Aorta (tissue), 5 donors: ENCODE measurements at regions of chr2 and their contacts with region 1.

Region 1: DNA sequence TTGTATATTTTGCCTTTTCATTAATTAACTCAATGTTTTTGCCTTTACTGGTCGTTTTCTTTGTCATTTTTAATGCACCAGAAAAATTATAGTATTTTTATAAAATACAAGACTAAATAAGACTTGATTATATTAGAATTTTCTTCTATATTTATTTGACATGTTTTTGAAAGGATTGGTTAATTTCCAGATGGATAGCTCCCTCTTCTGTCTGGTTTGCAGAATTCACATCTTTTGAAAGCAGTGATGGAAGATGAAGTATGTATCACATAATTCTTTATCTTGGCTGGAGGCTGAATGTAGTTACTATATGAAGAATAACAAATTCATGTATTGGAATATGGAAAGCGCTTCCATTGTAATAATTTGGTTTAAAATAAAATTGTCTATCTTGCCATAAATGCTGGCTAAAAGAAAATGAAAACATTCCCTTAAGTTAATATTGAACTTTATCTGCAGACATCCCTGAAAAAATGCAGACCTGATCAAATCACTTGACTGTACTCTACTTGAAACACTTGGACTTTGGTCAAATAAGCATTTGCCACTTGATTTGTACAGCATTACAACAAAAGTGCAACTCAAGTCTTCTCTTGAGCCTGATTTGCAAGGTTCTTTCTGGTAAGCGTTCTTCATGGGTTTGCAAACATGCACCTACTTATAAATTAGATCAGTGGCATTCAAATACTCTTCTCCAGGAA is 86.3 kb upstream of the EFEMP1 start:
- DNase-seq: no peak
- ATAC-seq: peak; percentile 68
- H3K4me3 ChIP-seq: no peak overlapping the region
- H3K27ac ChIP-seq: no peak overlapping the region
- H3K4me1 ChIP-seq: peaks cover 2 to 3% of the 10 kb centered on the region in 2 donors
- H3K27me3 ChIP-seq: no peaks in the 10 kb centered on the region

Region 2: DNA sequence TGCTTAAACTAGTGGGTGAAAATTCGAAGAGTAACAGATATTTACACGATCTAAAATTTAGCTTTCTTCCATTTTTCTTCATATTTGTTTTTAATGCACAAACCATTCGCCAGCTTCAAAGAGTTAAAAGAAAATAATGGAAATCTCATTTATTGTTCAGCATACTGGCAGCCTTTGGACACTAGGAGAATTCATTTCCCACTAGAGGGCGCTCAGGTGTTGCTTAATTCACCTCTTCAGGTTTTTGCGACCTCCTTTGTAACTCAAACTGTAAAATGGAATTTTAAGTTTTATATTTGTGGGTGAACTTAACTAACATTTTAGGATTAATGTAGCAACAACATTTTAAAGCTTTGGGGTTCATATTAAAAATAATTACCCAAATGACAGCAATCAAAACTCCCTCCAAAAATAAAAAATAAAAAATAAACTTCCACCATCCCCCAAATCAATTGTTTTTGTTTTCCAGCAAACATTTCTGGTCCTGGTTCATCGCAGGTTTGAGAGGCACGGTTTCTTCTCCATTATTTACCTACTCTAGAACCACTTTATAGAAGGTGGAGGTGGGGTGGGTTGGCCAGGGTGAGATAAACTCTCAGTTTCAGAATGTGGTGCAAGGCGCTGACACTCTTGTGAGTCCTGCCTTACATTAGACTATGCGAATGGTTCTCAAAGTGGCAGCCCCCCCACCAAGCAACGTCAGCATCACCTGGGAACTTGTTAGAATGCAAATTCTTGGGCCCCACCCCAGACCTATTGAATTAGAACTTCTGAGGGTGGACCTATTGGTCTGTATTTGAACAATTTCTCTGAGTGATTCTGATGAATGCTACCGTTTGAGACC is 291.5 kb before region 1 on chr2:
- intact Hi-C with region 1: loop called (anchors 1 to 2 kb)
- DNase-seq: no peak
- ATAC-seq: peak; percentile 82
- H3K4me3 ChIP-seq: no peak overlapping the region
- H3K27ac ChIP-seq: no peak overlapping the region
- H3K4me1 ChIP-seq: no peaks in the 10 kb centered on the region
- H3K27me3 ChIP-seq: no peaks in the 10 kb centered on the region

Region 3: GRCh38 chr2:55771612-55772011 is 238.3 kb before region 1 on chr2:
- intact Hi-C with region 1: loop called (anchors 2 to 5 kb)
- DNase-seq: no peak
- ATAC-seq: no peak
- H3K4me3 ChIP-seq: no peak overlapping the region
- H3K27ac ChIP-seq: no peak overlapping the region
- H3K4me1 ChIP-seq: no peaks in the 10 kb centered on the region
- H3K27me3 ChIP-seq: no peaks in the 10 kb centered on the region

Region 4: DNA sequence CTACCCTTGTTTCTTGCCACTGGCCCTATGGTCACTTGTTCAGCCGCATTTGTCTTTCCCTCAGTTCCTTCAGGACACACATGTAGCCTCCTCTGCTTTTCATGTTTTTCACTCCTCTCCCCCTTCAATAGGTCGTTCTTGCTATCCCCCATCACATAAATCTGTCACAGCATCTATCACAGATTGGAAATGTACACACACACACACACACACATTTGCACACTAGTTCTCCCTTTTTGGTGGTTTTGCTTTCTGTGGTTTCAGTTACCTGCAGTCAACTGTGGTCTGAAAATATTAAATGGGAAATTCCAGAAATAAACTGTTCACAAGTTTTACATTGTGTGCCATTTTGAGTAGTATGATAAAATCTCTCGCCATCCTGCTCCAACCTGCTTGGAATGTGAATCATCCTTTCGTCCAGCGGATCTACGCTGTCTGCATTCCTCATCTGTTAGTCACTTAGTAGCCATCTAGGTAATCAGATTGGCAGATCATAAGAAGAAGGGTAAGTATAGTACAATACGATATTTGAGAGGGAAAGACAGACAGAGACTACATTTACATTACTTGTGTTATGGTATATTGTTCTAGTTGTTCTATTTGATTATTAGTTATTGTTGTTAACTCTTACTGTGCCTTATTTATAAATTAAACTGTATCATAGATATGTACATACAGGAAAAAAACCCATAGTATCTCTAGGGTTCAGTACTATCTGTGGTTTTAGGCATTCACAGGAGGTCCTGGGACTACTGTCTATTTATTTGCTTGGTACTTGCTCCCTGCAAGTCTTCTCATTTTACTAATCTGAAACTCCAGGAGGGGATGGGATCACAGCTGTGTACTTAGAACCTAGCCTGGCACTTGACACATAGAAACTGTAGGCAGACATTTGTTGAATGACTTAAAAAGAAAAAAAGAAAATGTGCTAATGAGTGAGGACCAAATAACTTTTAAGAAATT is 230.2 kb before region 1 on chr2:
- intact Hi-C with region 1: loop called in 1 of 2 experiments (anchors 5 kb)
- DNase-seq: no peak
- ATAC-seq: no peak
- H3K4me3 ChIP-seq: no peak overlapping the region
- H3K27ac ChIP-seq: no peak overlapping the region
- H3K4me1 ChIP-seq: peaks cover 0 to 1% of the 10 kb centered on the region in 2 donors
- H3K27me3 ChIP-seq: no peaks in the 10 kb centered on the region

Region 5: DNA sequence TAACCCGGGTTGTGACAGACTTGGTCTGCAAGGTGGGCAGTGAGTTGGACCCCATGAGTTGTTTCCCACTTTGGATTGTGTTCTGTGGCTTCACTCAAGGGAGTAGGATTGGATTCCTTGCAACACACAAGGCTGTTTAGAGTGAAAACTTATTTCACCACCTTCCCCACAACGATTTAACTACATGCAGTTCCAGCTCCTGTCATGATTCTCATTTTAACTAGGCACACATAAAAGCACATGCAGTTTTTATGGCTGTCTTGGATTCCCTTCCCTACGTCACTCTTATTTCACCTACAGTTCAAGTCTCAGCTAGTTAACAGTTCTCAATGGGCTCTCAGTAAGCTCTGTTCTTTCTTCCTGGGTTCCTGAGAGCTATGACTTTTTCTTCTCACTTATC is 102.2 kb before region 1 on chr2:
- intact Hi-C with region 1: no loop called
- DNase-seq: no peak
- ATAC-seq: no peak
- H3K4me3 ChIP-seq: no peak overlapping the region
- H3K27ac ChIP-seq: peak overlapping the region in 1 of 2 donors; percentile 14
- H3K4me1 ChIP-seq: peaks cover 0 to 6% of the 10 kb centered on the region in 2 donors
- H3K27me3 ChIP-seq: no peaks in the 10 kb centered on the region

Region 6: GRCh38 chr2:55966401-55967118 is 43.3 kb before region 1 on chr2:
- intact Hi-C with region 1: loop called in 1 of 2 experiments (anchors 5 kb)
- DNase-seq: peak; percentile 69 to 77
- ATAC-seq: peak; percentile 68
- H3K4me3 ChIP-seq: no peak overlapping the region
- H3K27ac ChIP-seq: peak overlapping the region; percentile 43 to 70
- H3K4me1 ChIP-seq: peaks cover 2 to 5% of the 10 kb centered on the region in 2 donors
- H3K27me3 ChIP-seq: no peaks in the 10 kb centered on the region